Posterior vena cava (tissue), 2 donors: ENCODE measurements at regions of chr15 and their contacts with region 1.

Region 1: GRCh38 chr15:36893276-36893675 is 207.1 kb downstream of the MEIS2 start:
- DNase-seq: no peak

Region 2: GRCh38 chr15:36951731-36952247 is 58.5 kb after region 1 on chr15:
- intact Hi-C with region 1: loop called in 1 of 2 experiments (anchors 5 kb)
- DNase-seq: no peak